Mammary epithelial cell (primary cell): ENCODE measurements at regions of chr2 and their contacts with region 1.

Region 1: DNA sequence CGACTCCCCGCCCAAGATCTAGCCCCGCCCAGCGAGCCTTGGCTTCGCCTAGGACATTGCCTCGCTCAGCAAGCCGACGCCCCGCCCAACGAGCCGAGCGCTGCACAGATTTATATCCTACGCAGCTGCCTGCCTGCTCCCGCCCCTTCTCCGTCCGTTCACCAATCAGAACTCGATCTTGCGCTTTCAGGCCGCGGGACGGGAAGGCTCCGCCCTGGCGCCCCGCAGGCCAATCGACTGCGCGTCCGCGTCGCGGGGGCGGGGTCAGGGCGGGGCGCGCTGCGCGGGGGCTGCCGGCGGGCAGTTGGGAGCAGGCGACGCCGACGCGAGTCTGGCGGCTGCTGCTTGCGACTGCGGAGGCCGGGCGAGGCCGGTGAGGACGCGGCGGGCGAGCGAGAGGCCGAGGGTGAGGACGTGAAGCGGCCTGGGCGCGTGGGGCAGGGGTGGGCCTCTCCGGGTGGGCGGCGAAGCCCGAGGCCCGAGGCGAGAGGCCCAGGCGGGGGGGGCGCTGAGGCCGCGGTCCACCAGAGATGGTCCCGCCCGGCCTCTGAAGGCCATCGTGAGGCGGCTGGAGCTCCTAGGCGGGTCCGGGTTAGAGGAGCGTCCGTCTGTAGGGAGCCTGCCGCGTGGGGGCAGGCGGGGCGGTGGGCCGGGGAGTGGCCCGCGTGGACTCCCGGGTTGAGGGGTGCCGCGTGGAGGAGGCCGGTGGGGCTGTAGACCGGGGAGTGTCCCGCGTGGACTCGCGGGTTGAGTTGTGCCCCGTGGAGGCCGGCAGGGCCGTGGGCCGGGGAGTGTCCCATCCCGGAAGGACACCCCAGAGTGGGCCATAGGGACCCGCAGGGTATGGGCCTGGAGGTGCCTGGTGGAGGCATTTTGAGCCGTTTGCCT is at the start of gene FARP2:
- DNase-seq: peak; percentile 96
- H3K4me3 ChIP-seq: peak within 1 kb of the TSS; percentile 84 to 92 (median 86)
- H3K27ac ChIP-seq: peak within 1 kb of the TSS; percentile 59
- H3K4me1 ChIP-seq: peaks cover 16% of the 10 kb centered on the region
- H3K27me3 ChIP-seq: no peaks in the 10 kb centered on the region
- CTCF ChIP-seq: no peak
- total RNA-seq, gene FARP2: 38.5 to 40.2 TPM

Region 2: GRCh38 chr2:241391892-241392665 is 35.9 kb after region 1 on chr2:
- CTCF ChIA-PET with region 1: no interaction called
- dilution Hi-C with region 1: no loop called
- in situ Hi-C with region 1: no loop called
- intact Hi-C with region 1: loop called (anchors 1 kb)
- DNase-seq: peak; percentile 14
- H3K4me3 ChIP-seq: no peak overlapping the region
- H3K27ac ChIP-seq: no peak overlapping the region
- H3K4me1 ChIP-seq: peaks cover 23% of the 10 kb centered on the region
- H3K27me3 ChIP-seq: no peaks in the 10 kb centered on the region
- CTCF ChIP-seq: peak; percentile 13 to 55

Region 3: GRCh38 chr2:241482176-241482955 is 126.1 kb after region 1 on chr2:
- CTCF ChIA-PET with region 1: no interaction called
- dilution Hi-C with region 1: no loop called
- in situ Hi-C with region 1: no loop called
- intact Hi-C with region 1: no loop called
- DNase-seq: no peak
- H3K4me3 ChIP-seq: no peak overlapping the region
- H3K27ac ChIP-seq: no peak overlapping the region
- H3K4me1 ChIP-seq: no peaks in the 10 kb centered on the region
- H3K27me3 ChIP-seq: no peaks in the 10 kb centered on the region
- CTCF ChIP-seq: no peak

Region 4: DNA sequence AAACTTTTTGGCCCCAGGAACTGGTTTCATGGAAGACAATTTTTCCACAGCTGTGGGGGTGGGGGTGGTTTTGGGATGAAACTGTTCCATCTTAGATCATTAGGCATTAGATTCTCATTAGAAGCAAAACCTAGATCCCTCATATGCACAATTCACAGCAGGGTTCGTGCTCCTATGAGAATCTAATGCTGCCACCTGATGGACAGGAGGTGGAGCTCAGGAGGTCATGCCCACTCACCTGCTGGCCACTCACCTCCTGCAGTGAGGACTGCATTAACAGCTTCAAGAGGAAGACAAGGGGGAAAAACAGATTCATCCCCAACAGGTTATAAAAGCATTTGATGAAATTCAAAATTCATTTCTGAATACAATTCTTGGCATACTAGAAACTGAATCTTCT is 242.3 kb after region 1 on chr2:
- CTCF ChIA-PET with region 1: no interaction called
- dilution Hi-C with region 1: no loop called
- in situ Hi-C with region 1: no loop called
- intact Hi-C with region 1: loop called (anchors 5 kb)
- DNase-seq: peak; percentile 11
- H3K4me3 ChIP-seq: no peak overlapping the region
- H3K27ac ChIP-seq: no peak overlapping the region
- H3K4me1 ChIP-seq: no peaks in the 10 kb centered on the region
- H3K27me3 ChIP-seq: no peaks in the 10 kb centered on the region
- CTCF ChIP-seq: peak; percentile 22 to 51